MCF 10A (cell line): ENCODE measurements at regions of chr12 and their contacts with region 1.

Region 1: DNA sequence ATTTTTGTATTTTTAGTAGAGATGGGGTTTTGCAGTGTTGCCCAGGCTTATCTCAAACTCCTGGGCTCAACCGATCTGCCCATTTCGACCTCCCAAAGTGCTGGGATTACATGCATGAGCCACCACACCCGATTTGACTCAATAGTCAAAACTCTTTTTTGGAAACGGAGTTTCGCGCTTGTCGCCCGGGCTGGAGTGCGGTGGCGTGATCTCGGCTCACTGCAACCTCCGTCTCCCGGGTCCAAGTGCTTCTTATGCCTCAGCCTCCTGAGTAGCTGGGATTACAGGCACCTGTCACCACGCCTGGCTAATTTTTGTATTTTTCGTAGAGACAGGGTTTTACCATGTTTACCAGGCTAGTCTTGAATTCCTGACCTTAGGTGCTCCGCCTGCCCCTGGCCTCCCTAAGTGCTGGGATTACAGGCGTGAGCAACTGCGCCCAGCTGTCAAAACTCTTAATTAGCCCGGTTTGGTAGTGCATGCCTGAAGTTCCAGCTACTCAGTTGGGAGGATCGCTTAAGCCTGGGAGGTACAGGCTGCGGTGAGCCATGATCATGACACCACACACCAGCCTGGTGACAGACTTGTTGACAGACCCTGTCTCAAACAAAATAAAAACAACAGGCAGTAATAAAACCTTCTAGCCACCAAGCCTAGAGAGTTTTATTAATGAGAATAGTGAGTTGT is 12.4 kb downstream of the MED21 start:
- DNase-seq: no peak
- H3K4me3 Mint-ChIP-seq: no peak overlapping the region
- H3K27ac Mint-ChIP-seq: no peak overlapping the region
- H3K4me1 Mint-ChIP-seq: no peaks in the 10 kb centered on the region
- H3K27me3 Mint-ChIP-seq: no peaks in the 10 kb centered on the region
- CTCF ChIP-seq: no peak

Region 2: DNA sequence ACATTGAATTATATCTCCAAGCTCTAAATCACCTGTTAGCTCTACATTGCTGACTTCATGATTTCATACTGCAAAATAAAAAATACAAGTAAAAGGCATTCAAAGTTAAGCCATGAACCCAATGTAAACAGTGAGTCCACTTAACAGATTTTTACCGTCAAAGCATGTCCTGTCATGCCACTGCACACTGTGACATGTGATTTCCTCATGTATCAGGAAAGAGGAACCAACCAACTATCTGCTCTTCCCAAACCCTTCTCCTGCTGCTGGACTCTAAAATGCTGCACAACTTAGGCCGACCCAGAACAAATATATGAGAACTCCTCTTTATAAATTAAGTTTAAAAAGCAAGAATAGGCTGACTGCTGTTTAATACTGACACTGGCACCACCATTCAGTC is 58.1 kb before region 1 on chr12:
- CTCF ChIA-PET with region 1: no interaction called
- POLR2A ChIA-PET with region 1: no interaction called
- intact Hi-C with region 1: no loop called
- DNase-seq: no peak
- H3K4me3 Mint-ChIP-seq: no peak overlapping the region
- H3K27ac Mint-ChIP-seq: peak overlapping the region; percentile 51
- H3K4me1 Mint-ChIP-seq: no peaks in the 10 kb centered on the region
- H3K27me3 Mint-ChIP-seq: no peaks in the 10 kb centered on the region
- CTCF ChIP-seq: no peak

Region 3: DNA sequence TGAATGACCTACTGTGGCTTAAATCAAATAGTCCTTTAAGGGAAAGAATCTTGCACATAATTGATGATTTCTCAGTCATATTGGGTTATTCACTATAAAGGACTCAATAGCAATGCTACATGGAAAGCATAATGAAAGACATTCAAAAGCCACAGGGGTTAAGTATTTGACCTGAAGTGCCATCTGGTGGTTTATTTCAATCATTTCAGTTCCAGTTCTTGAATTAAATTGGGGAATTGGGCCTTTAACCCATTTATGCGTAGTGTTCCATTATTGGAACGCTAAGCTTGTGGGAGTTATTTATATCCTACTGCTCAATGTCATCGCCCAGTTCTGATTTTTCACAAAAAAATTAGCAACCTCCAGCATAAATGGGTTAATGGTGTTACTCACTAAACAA is 88.9 kb after region 1 on chr12:
- CTCF ChIA-PET with region 1: interaction called, 12 read pairs
- POLR2A ChIA-PET with region 1: no interaction called
- intact Hi-C with region 1: no loop called
- DNase-seq: peak; percentile 53
- H3K4me3 Mint-ChIP-seq: no peak overlapping the region
- H3K27ac Mint-ChIP-seq: no peak overlapping the region
- H3K4me1 Mint-ChIP-seq: no peaks in the 10 kb centered on the region
- H3K27me3 Mint-ChIP-seq: no peaks in the 10 kb centered on the region
- CTCF ChIP-seq: peak; percentile 34